ENCODE measurements at regions of chr21 and their contacts with region 1.

Region 1: DNA sequence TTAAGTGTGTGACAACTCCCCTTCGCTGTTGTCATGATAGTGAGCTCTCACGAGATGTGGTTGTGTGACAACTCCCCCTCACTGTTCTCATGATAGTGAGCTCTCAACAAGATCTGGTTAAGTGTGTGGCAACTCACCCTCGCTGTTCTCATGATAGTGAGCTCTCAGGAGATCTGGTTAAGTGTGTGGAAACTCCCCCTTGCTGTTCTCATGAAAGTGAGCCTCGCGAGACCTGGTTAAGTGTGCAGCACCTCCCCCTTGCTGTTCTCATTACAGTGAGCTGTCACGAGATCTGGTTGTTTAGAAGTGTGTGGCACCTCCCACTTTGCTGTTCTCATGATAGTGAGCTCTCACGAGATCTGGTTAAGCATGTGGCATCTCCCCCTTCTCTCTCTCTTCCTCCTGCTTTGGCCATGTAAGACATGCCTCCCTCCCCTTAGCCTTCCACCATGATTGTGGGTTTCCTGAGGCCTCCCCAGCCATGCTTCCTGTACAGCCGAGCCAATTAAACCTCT is 25.1 kb upstream of the LSS start:
- DNase-seq: peak in 1 of 5 donors; percentile 12
- ATAC-seq: no peak
- H3K4me3 ChIP-seq: no peak overlapping the region
- H3K27ac ChIP-seq: no peak overlapping the region
- H3K4me1 ChIP-seq: peaks cover 0 to 24% (median 1%) of the 10 kb centered on the region in 12 donors
- H3K27me3 ChIP-seq: no peaks in the 10 kb centered on the region
- CTCF ChIP-seq: no peak
- POLR2A ChIP-seq: no peak

Region 2: GRCh38 chr21:45847870-45848269 is 405.8 kb before region 1 on chr21:
- intact Hi-C with region 1: no loop called
- DNase-seq: no peak
- ATAC-seq: no peak
- H3K4me3 ChIP-seq: no peak overlapping the region
- H3K27ac ChIP-seq: peak overlapping the region in 1 of 12 donors; percentile 20
- H3K4me1 ChIP-seq: peaks cover 0 to 18% (median 9%) of the 10 kb centered on the region in 12 donors
- H3K27me3 ChIP-seq: peaks cover 0 to 3% (median 0%) of the 10 kb centered on the region in 9 donors
- CTCF ChIP-seq: no peak
- POLR2A ChIP-seq: no peak

Region 3: DNA sequence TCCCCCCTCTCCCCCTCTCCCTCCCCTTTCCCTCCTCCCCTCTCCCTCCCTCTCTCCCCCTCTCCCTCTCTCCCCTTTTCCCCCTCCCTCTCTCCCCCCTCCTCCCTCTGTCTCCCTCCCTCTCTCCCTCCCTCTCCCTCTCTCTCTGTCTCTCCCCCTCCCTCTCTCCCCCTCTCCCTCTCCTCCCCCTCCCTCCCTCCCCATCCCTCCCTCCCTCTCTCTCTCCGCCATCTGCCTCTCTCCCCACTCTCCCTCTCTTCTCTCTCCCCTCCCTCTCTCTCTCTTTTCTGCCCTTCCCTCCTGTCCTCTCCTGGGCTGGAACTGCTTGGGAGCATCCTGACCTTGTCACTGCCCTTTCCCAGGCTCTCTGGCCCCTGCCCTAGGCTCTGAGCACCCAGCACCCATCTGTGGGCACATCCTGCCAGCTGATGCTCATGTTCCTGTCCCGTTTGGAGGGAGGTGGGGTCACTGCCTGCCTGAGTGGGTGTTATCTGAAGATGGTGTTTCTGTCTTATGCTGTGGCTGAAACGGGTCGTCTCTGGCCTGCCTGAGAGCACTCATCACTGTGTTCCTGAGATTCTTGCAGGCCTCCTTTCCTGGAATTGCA is 109.1 kb before region 1 on chr21:
- intact Hi-C with region 1: loop called in 2 of 10 experiments (anchors 5 to 10 kb)
- DNase-seq: peak in 2 of 5 donors; percentile 13
- ATAC-seq: no peak
- H3K4me3 ChIP-seq: no peak overlapping the region
- H3K27ac ChIP-seq: no peak overlapping the region
- H3K4me1 ChIP-seq: peaks cover 0 to 9% (median 6%) of the 10 kb centered on the region in 12 donors
- H3K27me3 ChIP-seq: no peaks in the 10 kb centered on the region
- CTCF ChIP-seq: no peak
- POLR2A ChIP-seq: no peak